ENCODE measurements at regions of chr11 and their contacts with region 1.

Region 1: GRCh38 chr11:66311965-66312548 is 4.8 kb downstream of the CD248 start:
- DNase-seq: peak; percentile 96
- ATAC-seq: peak; percentile 84

Region 2: GRCh38 chr11:66328307-66329144 is 16.5 kb after region 1 on chr11:
- intact Hi-C with region 1: loop called (anchors 2 kb)
- DNase-seq: peak; percentile 85
- ATAC-seq: peak; percentile 84

Region 3: DNA sequence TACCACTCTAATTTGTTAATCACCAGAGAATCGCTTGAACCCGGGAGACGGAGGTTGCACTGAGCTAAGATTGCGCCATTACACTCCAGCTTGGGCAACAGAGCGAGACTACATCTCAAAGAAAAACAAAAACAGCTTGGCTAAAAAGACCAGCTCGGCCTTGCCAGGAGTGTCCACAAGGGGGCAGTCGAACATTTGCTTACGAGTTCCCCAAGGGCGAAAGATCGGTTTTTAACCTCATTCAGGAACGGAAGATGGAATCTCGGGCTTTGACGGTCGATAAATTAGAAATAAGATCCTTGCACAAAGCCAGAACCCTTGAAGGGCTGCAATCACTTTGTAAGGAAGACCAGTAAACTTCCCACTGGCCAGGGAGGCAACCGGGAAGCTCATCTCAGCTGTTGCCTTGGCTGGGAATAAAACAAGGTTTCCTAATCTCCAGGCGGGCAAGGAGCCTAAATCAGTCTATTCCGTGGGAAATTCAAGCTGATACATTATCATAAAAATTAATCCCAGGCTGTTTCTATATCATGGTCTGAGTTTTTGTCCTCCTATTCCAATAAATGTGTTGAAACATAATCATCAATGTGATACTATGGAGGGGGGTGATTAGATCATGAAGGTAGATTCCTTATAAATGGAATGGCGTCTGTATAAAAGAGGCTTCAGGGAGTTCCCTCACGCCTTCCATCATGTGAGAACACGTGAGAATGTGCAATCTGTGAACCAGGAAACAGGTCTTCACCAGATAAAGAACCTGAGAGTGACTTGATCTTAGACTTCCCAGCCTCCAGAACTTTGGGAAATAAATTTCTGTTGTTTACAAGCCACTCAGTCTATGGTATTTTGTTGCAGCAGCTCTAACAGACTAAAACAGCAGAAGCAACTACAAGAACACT is 74.4 kb after region 1 on chr11:
- intact Hi-C with region 1: loop called (anchors 10 kb)
- DNase-seq: peak; percentile 91
- ATAC-seq: peak; percentile 86